ENCODE measurements at regions of chr11 and their contacts with region 1.

Region 1: GRCh38 chr11:134294664-134295063 is 18.5 kb downstream of the GLB1L3 start:
- DNase-seq: no peak
- ATAC-seq: no peak
- H3K4me3 ChIP-seq: no peak overlapping the region
- H3K4me3 Mint-ChIP-seq: no peak overlapping the region
- H3K27ac ChIP-seq: no peak overlapping the region
- H3K27ac Mint-ChIP-seq: no peak overlapping the region
- H3K4me1 ChIP-seq: no peaks in the 10 kb centered on the region
- H3K4me1 Mint-ChIP-seq: no peaks in the 10 kb centered on the region
- H3K27me3 ChIP-seq: no peaks in the 10 kb centered on the region
- H3K27me3 Mint-ChIP-seq: no peaks in the 10 kb centered on the region
- CTCF ChIP-seq: no peak

Region 2: DNA sequence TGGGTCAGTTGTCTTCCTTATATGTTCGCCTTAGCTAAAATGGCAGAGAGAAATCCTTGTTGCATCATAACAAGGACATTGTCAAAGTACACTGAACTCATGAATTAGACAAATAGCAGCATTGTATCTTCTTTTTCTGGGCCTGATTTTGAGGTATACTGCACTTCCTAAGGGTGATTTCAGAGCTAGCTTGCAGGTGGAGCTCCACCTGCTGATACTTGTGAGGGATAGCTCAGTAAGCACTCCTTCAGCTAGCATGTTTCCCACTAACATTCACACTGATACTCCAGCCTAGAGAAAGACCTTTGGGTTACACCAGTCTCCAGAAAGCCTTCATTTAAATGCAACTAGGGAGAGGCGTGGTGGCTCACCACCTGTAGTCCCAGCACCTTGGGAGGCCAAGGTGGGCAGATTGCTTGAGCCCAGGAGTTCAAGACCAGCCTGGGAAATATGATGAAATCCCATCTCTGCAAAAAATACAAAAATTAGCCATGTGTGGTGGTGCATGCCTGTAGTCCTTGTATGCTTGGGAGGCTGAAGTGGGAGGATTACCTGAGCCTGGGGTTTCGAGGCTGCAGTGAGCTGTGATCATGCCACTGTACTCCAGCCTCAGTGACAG is 196.0 kb before region 1 on chr11:
- CTCF ChIA-PET with region 1: no interaction called
- POLR2A ChIA-PET with region 1: no interaction called
- intact Hi-C with region 1: loop called in 1 of 2 experiments (anchors 5 kb)
- DNase-seq: peak in 2 of 9 experiments; percentile 30 to 48
- ATAC-seq: peak; percentile 48
- H3K4me3 ChIP-seq: no peak overlapping the region
- H3K4me3 Mint-ChIP-seq: no peak overlapping the region
- H3K27ac ChIP-seq: no peak overlapping the region
- H3K27ac Mint-ChIP-seq: no peak overlapping the region
- H3K4me1 ChIP-seq: no peaks in the 10 kb centered on the region
- H3K4me1 Mint-ChIP-seq: peaks cover 3% of the 10 kb centered on the region
- H3K27me3 ChIP-seq: no peaks in the 10 kb centered on the region
- H3K27me3 Mint-ChIP-seq: no peaks in the 10 kb centered on the region
- CTCF ChIP-seq: no peak

Measured in CD8-positive, alpha-beta T cell (primary cell).